GM12878 (cell line): ENCODE measurements at regions of chr6 and their contacts with region 1.

Region 1: DNA sequence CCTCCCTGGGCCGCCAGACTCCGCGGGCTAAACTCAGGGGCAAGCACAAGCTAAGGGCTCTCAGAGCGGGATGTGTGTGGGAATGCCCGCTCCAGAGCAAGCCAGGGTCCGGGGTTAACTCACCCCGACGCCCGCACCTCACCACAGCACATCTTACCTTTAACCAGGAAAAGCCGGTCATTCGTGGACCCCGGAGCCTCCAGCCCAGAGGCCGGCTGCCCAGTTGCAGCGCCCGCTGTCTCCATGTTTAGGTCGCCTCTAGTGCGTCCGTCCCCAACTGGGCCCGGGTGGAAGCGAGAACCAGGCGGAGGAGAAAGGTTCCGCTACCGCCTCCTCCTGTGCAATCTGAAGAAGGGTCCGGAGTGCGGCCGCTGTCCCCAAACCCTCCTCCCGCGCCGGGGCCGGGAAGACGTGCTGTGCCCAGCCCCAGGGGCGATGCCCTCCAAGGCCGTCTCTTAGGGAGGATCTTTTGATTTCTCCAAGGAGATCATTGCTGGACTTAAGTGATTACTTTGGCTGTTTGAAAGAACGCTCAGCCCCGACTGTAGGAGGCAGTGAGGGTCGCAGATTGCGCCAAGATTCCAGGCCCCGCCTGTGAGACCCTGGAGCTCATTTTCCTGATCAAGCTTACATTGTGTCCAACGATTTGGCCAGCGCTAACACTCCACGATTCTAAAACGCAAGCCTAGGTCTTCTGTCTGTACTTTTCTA is at the start of gene TMEM242:
- DNase-seq: peak; percentile 74
- ATAC-seq: peak; percentile 91
- H3K4me3 ChIP-seq: peak within 1 kb of the TSS; percentile 86
- H3K27ac ChIP-seq: peak within 1 kb of the TSS; percentile 49
- H3K4me1 ChIP-seq: peaks cover 9% of the 10 kb centered on the region
- H3K27me3 ChIP-seq: no peaks in the 10 kb centered on the region
- CTCF ChIP-seq: peak in 2 of 3 experiments; percentile 13 to 14; a peak in 1 of 6 replicates
- EP300 ChIP-seq: no peak
- POLR2A ChIP-seq: peak; percentile 96
- RAD21 ChIP-seq: no peak; the same call in 1 of the 2 replicates
- polyA plus RNA-seq, gene TMEM242: 6.1 to 6.2 TPM

Region 2: DNA sequence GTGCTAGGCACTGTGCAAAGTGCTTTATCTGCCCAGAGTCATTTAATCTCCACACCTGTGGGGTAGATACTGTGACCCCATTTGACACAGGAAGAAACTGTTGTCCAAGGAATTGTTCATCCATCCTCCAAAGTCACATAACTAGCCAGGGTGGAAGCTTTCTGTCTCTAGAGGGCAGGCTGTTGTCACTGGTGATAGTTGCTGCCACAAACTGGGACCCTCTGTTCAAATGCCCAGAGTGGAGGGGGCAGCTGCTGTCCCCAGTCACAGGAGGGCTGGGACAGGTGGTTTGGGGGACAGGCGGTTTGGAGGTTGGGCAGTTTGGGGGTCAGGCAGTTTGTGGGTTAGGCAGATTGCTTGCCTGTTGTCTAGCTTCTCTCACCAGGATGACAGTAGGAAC is 16.0 kb after region 1 on chr6:
- CTCF ChIA-PET with region 1: interaction called, 104 read pairs
- POLR2A ChIA-PET with region 1: interaction called, 3 read pairs
- RAD21 ChIA-PET with region 1: interaction called, 9 read pairs
- SMC1A ChIA-PET with region 1: interaction called, 63 read pairs
- in situ Hi-C with region 1: no loop called
- intact Hi-C with region 1: no loop called
- DNase-seq: no peak
- ATAC-seq: peak; percentile 64
- H3K4me3 ChIP-seq: no peak overlapping the region
- H3K27ac ChIP-seq: no peak overlapping the region
- H3K4me1 ChIP-seq: no peaks in the 10 kb centered on the region
- H3K27me3 ChIP-seq: peaks cover 0 to 2% of the 10 kb centered on the region in 2 experiments; a peak in 1 of 4 replicates
- CTCF ChIP-seq: peak; percentile 14 to 48 (median 20); a peak in 3 of 6 replicates
- EP300 ChIP-seq: no peak
- POLR2A ChIP-seq: no peak
- RAD21 ChIP-seq: peak; percentile 20; the same call in 1 of the 2 replicates

Region 3: DNA sequence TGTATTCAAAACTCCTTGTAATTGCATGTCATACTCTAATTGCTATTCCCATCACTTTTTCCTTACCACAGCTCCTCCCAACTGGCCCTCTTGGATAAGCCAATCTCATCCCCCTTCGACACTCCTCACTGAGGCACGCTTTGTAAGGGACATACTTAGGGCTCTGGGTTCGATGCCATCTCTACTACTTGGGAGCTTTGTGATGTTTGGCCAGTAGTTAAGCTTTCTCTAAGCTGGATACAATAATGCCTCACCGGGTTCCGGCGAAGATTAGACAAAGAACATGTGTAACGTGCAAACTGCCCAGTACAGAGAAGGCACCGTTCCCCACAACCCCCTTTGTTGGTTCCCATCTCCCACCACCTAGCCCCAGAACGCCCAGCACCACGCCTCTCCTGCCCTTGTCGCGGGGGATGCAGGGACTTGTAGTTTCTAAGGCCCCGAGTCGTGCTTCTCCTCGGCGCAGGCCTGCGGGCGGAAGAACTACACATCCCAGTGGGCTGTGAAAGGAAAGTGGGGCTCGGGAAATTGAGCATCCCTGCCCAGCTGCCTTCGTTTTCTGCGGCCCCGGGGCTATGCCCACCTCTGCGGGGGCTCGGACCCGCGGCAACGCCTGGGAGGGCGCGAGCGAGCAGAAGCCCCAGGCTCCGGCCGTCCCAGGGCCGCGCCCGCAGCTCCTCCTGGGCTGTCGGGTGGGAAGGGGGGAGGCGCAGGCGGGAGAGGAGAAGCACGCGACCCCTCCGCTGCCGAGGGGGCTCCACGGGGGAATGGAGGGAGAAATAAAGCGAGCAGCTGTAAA is 56.4 kb after region 1 on chr6:
- CTCF ChIA-PET with region 1: interaction called, 17 read pairs
- POLR2A ChIA-PET with region 1: interaction called, 7 read pairs
- RAD21 ChIA-PET with region 1: interaction called, 20 read pairs
- SMC1A ChIA-PET with region 1: interaction called, 34 read pairs
- in situ Hi-C with region 1: no loop called
- intact Hi-C with region 1: loop called (anchors 2 kb)
- DNase-seq: peak; percentile 65
- ATAC-seq: peak; percentile 86
- H3K4me3 ChIP-seq: peak overlapping the region; percentile 98
- H3K27ac ChIP-seq: peak overlapping the region; percentile 50; the same call in 1 of the 2 replicates
- H3K4me1 ChIP-seq: no peaks in the 10 kb centered on the region
- H3K27me3 ChIP-seq: peaks cover 0 to 4% of the 10 kb centered on the region in 2 experiments; a peak in 1 of 4 replicates
- CTCF ChIP-seq: no peak
- EP300 ChIP-seq: no peak
- POLR2A ChIP-seq: 0 out of 2 replicates have a peak, but pooled peaks have one; percentile 42
- RAD21 ChIP-seq: no peak

Region 4: GRCh38 chr6:157443066-157443800 is 119.8 kb after region 1 on chr6:
- CTCF ChIA-PET with region 1: interaction called, 4 read pairs
- POLR2A ChIA-PET with region 1: no interaction called
- RAD21 ChIA-PET with region 1: interaction called, 3 read pairs
- SMC1A ChIA-PET with region 1: interaction called, 3 read pairs
- in situ Hi-C with region 1: no loop called
- intact Hi-C with region 1: loop called (anchors 5 kb)
- DNase-seq: peak; percentile 80
- ATAC-seq: peak; percentile 97
- H3K4me3 ChIP-seq: no peak overlapping the region
- H3K27ac ChIP-seq: no peak overlapping the region
- H3K4me1 ChIP-seq: 0 out of 2 replicates have a peak, but pooled peaks cover 3% of the 10 kb centered on the region
- H3K27me3 ChIP-seq: no peaks in the 10 kb centered on the region
- CTCF ChIP-seq: no peak
- EP300 ChIP-seq: peak; percentile 84 to 87
- POLR2A ChIP-seq: no peak
- RAD21 ChIP-seq: no peak

Region 5: DNA sequence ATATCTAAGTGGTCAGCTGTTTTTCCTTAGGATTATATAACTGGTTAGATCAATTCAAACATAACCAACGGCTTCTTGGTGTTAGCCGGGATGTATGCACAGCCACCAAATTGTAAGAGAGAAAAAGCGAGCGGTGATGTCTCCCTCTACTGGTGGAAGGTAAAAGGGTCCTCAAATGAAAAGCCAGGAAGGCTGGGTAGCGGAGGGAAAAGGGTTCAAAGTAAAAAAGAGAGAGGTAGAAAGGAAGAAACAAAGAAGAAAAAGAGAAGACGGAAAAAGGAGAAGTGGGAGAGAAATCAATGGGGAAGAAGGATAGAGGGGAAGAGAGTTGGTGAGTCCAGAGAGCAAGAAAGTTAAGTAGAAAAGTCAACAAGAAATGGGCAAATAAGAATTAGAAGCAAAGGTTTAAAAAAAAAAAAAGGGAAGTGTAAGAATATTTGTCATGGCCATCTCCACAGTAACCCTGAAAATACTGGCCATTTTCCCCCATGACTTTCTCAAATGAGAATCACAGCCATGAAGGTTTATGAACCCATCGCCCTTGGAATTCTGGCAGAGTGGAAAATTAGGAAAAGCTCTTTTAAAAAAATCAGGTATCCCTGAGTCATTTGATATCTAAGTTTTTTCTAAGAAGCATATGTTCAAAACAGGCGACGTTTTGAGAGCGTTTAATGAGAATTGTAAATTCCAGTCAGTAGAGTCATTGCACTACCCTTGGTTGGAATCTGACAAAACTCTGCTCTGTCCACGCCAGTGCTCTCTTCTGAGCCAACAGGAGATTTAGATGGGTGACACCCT is 344.0 kb after region 1 on chr6:
- CTCF ChIA-PET with region 1: interaction called, 51 read pairs
- POLR2A ChIA-PET with region 1: no interaction called
- RAD21 ChIA-PET with region 1: interaction called, 7 read pairs
- SMC1A ChIA-PET with region 1: interaction called, 30 read pairs
- in situ Hi-C with region 1: loop called (anchors 5 kb)
- intact Hi-C with region 1: loop called (anchors 2 kb)
- DNase-seq: peak; percentile 36
- ATAC-seq: peak; percentile 94
- H3K4me3 ChIP-seq: no peak overlapping the region
- H3K27ac ChIP-seq: no peak overlapping the region
- H3K4me1 ChIP-seq: no peaks in the 10 kb centered on the region
- H3K27me3 ChIP-seq: 0 out of 4 replicates have a peak, but pooled peaks cover 0 to 2% of the 10 kb centered on the region in 2 experiments
- CTCF ChIP-seq: peak; percentile 74 to 81 (median 79)
- EP300 ChIP-seq: no peak
- POLR2A ChIP-seq: no peak
- RAD21 ChIP-seq: peak; percentile 95